Activated naive CD4-positive, alpha-beta T cell treated with anti-CD3 and anti-CD28 coated beads for 36 hours (primary cell): ENCODE measurements at regions of chr10 and their contacts with region 1.

Region 1: GRCh38 chr10:102476466-102477141 is 25.3 kb upstream of the C10orf95 start:
- DNase-seq: no peak
- H3K4me3 Mint-ChIP-seq: no peak overlapping the region
- H3K27ac Mint-ChIP-seq: peak overlapping the region; percentile 31
- H3K4me1 Mint-ChIP-seq: peaks cover 43% of the 10 kb centered on the region
- H3K27me3 Mint-ChIP-seq: no peaks in the 10 kb centered on the region

Region 2: DNA sequence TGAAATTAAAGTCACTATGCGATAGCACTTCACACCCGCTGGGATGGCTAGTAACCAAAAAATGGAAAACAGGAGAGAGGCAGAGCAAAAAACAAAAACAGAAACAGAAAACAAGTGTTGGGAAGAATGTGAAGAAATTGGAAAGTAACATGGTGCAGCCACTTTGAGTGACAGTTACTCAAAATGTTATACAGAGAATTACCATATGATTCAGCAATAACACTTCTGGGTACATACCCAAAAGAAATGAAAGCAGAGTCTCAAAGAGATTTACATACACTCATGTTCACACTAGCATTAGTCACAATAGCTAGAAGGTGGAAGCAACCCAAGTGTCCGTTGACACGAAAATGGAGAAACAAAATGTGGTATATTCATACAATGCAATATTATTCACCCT is 544.4 kb before region 1 on chr10:
- CTCF ChIA-PET with region 1: no interaction called
- intact Hi-C with region 1: no loop called
- DNase-seq: peak; percentile 31
- H3K4me3 Mint-ChIP-seq: no peak overlapping the region
- H3K27ac Mint-ChIP-seq: no peak overlapping the region
- H3K4me1 Mint-ChIP-seq: peaks cover 12% of the 10 kb centered on the region
- H3K27me3 Mint-ChIP-seq: no peaks in the 10 kb centered on the region

Region 3: DNA sequence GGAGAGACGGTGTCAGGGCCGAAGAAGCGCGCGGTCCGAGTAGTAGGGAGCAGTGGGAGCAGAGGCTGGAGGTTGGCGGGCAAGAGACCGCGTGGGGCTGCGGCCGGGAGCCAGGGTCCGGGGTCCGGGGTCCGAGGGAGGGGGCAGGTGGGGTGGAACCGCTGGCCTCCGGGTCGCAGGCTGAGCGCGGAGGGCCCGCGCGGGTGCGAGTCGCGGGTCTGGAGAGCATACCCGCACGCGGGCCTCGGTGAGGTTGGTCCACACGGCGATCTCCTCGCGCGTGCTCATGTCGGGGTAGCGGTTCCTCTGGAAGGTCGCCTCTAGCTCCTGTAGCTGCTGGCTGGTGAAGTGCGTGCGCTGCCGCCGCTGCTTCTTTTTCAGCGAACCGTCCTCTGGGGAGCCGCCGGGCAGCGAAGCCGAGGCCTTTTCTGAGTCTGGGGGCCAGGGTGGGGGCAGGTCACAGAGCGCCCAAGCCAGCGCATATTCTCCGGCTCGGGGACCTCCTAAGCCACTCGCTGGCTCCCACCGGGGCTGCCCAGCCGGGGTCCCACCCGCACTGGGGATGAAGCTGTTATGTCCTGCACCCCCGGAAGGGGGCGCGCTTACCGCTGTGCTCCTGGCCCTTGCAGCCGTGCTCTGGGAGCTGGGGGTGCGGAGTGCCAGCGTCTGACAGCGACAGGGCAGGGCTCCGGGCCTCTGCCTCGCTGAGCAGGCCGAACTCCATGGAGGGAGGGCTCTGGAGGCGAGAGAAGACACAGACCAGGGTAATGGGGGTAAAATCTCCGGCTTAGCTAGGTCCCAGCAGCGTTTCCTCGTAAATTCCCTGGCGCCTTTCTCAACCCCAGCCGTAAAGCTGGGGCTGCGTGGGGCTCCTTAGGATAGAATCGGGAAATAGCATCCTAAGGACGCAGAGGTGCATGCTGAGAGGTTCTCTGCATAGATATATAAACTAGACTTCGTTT is 245.0 kb before region 1 on chr10:
- CTCF ChIA-PET with region 1: interaction called, 36 read pairs
- intact Hi-C with region 1: loop called (anchors 1 kb)
- DNase-seq: peak; percentile 78
- H3K4me3 Mint-ChIP-seq: peak overlapping the region; percentile 60
- H3K27ac Mint-ChIP-seq: no peak overlapping the region
- H3K4me1 Mint-ChIP-seq: peaks cover 4% of the 10 kb centered on the region
- H3K27me3 Mint-ChIP-seq: peaks cover 52% of the 10 kb centered on the region

Region 4: DNA sequence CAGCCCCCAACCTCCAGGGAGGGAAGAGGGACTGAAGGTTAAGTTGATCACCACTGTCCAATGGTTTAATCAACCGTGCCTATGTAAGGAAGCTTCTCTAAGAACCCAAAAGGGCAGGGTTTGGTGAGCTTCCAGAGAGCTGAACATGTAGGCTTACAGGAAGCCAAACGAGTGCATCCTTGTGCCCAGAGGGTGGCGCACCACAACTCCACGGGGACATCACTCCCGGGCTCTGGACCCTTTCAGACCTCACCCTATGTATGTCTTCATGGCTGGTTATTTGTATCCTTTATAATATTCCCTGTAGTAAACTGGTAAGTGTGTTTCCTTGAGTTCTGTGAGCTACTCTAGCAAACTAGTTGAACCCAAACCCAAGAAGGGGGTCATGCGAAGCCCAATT is 92.6 kb before region 1 on chr10:
- CTCF ChIA-PET with region 1: interaction called, 15 read pairs
- intact Hi-C with region 1: loop called (anchors 2 kb)
- DNase-seq: peak; percentile 49
- H3K4me3 Mint-ChIP-seq: no peak overlapping the region
- H3K27ac Mint-ChIP-seq: no peak overlapping the region
- H3K4me1 Mint-ChIP-seq: peaks cover 10% of the 10 kb centered on the region
- H3K27me3 Mint-ChIP-seq: no peaks in the 10 kb centered on the region

Region 5: DNA sequence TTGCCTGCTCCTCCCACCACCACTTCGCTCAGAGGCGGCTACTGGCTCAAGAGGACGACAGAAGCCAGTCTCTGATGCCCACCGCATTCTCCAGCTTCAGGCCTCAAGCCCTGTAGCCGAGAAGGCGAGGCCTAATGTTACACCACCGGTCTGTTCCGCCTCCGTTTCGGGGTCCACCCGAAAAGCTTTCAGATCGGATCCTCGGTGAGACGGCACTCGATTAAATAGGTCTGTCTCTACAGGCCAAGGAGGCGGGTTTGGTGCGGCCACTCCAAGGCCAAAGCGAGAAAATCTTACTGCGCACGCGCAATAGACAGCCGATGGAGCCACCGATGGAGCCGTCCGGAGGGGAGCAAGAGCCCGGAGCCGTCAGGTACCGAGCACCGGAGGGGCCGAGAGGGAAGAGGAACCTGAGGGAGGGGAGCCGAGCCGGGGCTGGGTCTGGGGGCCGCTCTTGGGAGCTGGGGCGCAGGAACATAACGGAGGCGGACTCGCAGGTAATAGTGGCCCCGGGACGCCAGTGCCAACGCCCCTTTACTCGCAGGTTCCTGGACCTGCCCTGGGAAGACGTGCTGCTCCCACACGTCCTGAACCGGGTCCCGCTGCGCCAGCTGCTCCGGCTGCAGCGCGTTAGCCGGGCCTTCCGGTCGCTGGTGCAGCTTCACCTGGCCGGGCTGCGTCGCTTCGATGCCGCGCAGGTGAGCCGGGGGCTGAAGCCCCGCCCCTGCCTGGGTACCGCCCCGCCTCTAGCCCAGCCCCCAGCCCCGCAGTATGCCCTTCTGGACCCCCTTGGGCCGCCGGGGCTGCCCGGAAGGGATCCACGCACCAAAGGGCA is 55.6 kb before region 1 on chr10 and contains the start of gene FBXL15:
- CTCF ChIA-PET with region 1: interaction called, 37 read pairs
- intact Hi-C with region 1: loop called (anchors 1 kb)
- DNase-seq: peak; percentile 98
- H3K4me3 Mint-ChIP-seq: peak within 1 kb of the TSS; percentile 95
- H3K27ac Mint-ChIP-seq: peak within 1 kb of the TSS; percentile 91
- H3K4me1 Mint-ChIP-seq: peaks cover 30% of the 10 kb centered on the region
- H3K27me3 Mint-ChIP-seq: peaks cover 20% of the 10 kb centered on the region
- total RNA-seq, gene FBXL15: 9.9 to 10.8 TPM

Region 6: GRCh38 chr10:102450194-102450938 is 26.2 kb before region 1 on chr10:
- CTCF ChIA-PET with region 1: interaction called, 11 read pairs
- intact Hi-C with region 1: loop called (anchors 1 kb)
- DNase-seq: peak; percentile 82
- H3K4me3 Mint-ChIP-seq: peak overlapping the region; percentile 96
- H3K27ac Mint-ChIP-seq: peak overlapping the region; percentile 96
- H3K4me1 Mint-ChIP-seq: peaks cover 27% of the 10 kb centered on the region
- H3K27me3 Mint-ChIP-seq: no peaks in the 10 kb centered on the region

Region 7: DNA sequence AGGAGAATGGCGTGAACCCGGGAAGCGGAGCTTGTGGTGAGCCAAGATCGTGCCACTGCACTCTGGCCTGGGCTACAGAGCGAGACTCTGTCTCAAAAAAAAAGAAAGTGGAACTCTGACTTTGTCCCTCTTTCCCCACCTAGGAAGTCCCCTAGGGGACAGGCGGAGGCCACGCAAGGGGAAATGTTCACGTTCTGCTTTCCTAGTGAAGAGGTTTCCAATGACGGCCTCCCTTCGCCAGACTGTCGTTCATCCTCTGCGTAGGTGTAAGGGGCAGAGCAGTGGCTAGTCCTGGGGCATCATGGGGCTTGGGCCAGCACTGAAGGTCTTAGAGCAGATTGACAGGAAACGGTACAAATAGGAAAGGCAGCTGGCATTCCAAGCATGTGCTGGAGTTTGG is 57.7 kb after region 1 on chr10:
- CTCF ChIA-PET with region 1: no interaction called
- intact Hi-C with region 1: no loop called
- DNase-seq: no peak
- H3K4me3 Mint-ChIP-seq: no peak overlapping the region
- H3K27ac Mint-ChIP-seq: peak overlapping the region; percentile 48
- H3K4me1 Mint-ChIP-seq: peaks cover 2% of the 10 kb centered on the region
- H3K27me3 Mint-ChIP-seq: no peaks in the 10 kb centered on the region

Region 8: GRCh38 chr10:102583435-102584417 is 107.1 kb after region 1 on chr10:
- CTCF ChIA-PET with region 1: interaction called, 17 read pairs
- intact Hi-C with region 1: no loop called
- DNase-seq: peak; percentile 94
- H3K4me3 Mint-ChIP-seq: no peak overlapping the region
- H3K27ac Mint-ChIP-seq: no peak overlapping the region
- H3K4me1 Mint-ChIP-seq: peaks cover 5% of the 10 kb centered on the region
- H3K27me3 Mint-ChIP-seq: no peaks in the 10 kb centered on the region